Naive thymus-derived CD4-positive, alpha-beta T cell (primary cell): ENCODE measurements at regions of chr9 and their contacts with region 1.

Region 1: GRCh38 chr9:112793213-112793810 is 42.8 kb downstream of the SNX30 start:
- DNase-seq: peak; percentile 59 to 76 (median 72)
- ATAC-seq: peak; percentile 98
- H3K4me3 ChIP-seq: no peak overlapping the region
- H3K4me3 Mint-ChIP-seq: no peak overlapping the region
- H3K27ac ChIP-seq: no peak overlapping the region
- H3K27ac Mint-ChIP-seq: no peak overlapping the region
- H3K4me1 ChIP-seq: no peaks in the 10 kb centered on the region
- H3K4me1 Mint-ChIP-seq: peaks cover 0 to 19% (median 12%) of the 10 kb centered on the region in 7 donors
- H3K27me3 ChIP-seq: no peaks in the 10 kb centered on the region
- H3K27me3 Mint-ChIP-seq: no peaks in the 10 kb centered on the region

Region 2: DNA sequence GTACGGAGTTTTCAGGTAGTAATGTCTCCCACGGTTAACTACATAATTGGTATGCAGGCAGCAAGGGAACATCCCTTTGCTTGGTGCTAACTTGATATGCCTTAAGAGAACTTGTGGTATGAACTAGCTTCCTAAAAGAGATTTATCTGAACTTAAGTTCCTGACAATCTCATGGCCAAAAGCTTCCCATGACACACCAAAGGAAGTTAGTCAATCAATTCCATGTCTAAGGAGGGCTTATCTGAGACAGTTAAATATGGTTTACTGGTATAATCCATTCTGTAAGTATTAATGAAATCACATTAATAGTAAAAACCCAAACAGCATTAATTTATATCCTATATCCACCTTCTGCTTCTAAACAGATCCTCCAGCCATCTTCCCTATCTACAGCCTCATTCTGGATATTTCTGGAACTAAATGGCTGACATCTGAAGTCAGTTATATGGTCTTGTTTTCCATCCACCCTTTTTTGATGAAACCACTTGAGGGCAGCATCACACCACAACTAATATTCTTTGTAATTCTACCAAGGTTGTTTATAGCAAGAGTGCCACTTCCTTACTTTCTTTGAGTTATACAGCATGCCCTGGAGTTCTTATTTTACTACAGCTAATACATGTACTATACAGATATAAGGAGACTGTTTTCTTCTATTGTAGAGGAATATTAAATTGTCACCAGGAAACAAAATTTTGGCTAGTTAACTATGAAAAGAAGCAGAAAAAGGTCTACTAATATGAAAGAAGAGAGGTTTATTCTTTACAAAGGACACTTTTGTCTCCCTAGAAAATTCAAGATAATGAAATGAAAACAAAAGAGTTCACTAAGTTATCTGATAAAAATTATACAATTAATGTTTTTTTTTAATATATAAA is 1033.3 kb before region 1 on chr9:
- CTCF ChIA-PET with region 1: no interaction called
- POLR2A ChIA-PET with region 1: no interaction called
- intact Hi-C with region 1: loop called in 1 of 2 experiments (anchors 1 kb)
- DNase-seq: peak in 8 of 9 donors; percentile 25 to 77 (median 68)
- ATAC-seq: peak; percentile 82
- H3K4me3 ChIP-seq: no peak overlapping the region
- H3K4me3 Mint-ChIP-seq: no peak overlapping the region
- H3K27ac ChIP-seq: no peak overlapping the region
- H3K27ac Mint-ChIP-seq: no peak overlapping the region
- H3K4me1 ChIP-seq: no peaks in the 10 kb centered on the region
- H3K4me1 Mint-ChIP-seq: peaks cover 3 to 8% (median 5%) of the 10 kb centered on the region in 7 donors
- H3K27me3 ChIP-seq: no peaks in the 10 kb centered on the region
- H3K27me3 Mint-ChIP-seq: no peaks in the 10 kb centered on the region

Region 3: GRCh38 chr9:112097712-112098688 is 695.3 kb before region 1 on chr9:
- CTCF ChIA-PET with region 1: no interaction called
- POLR2A ChIA-PET with region 1: no interaction called
- intact Hi-C with region 1: loop called in 1 of 2 experiments (anchors 5 kb)
- DNase-seq: peak; percentile 41 to 85 (median 68)
- ATAC-seq: peak; percentile 93
- H3K4me3 ChIP-seq: no peak overlapping the region
- H3K4me3 Mint-ChIP-seq: no peak overlapping the region
- H3K27ac ChIP-seq: no peak overlapping the region
- H3K27ac Mint-ChIP-seq: peak overlapping the region in 1 of 9 donors; percentile 15
- H3K4me1 ChIP-seq: peaks cover 0 to 4% of the 10 kb centered on the region in 2 donors
- H3K4me1 Mint-ChIP-seq: peaks cover 2 to 32% (median 12%) of the 10 kb centered on the region in 7 donors
- H3K27me3 ChIP-seq: no peaks in the 10 kb centered on the region
- H3K27me3 Mint-ChIP-seq: peaks cover 0 to 3% (median 0%) of the 10 kb centered on the region in 5 donors

Region 4: GRCh38 chr9:112140936-112141335 is 652.4 kb before region 1 on chr9:
- CTCF ChIA-PET with region 1: no interaction called
- POLR2A ChIA-PET with region 1: no interaction called
- intact Hi-C with region 1: no loop called
- DNase-seq: no peak
- ATAC-seq: no peak
- H3K4me3 ChIP-seq: no peak overlapping the region
- H3K4me3 Mint-ChIP-seq: no peak overlapping the region
- H3K27ac ChIP-seq: no peak overlapping the region
- H3K27ac Mint-ChIP-seq: no peak overlapping the region
- H3K4me1 ChIP-seq: no peaks in the 10 kb centered on the region
- H3K4me1 Mint-ChIP-seq: peaks cover 0 to 4% (median 0%) of the 10 kb centered on the region in 7 donors
- H3K27me3 ChIP-seq: no peaks in the 10 kb centered on the region
- H3K27me3 Mint-ChIP-seq: no peaks in the 10 kb centered on the region

Region 5: DNA sequence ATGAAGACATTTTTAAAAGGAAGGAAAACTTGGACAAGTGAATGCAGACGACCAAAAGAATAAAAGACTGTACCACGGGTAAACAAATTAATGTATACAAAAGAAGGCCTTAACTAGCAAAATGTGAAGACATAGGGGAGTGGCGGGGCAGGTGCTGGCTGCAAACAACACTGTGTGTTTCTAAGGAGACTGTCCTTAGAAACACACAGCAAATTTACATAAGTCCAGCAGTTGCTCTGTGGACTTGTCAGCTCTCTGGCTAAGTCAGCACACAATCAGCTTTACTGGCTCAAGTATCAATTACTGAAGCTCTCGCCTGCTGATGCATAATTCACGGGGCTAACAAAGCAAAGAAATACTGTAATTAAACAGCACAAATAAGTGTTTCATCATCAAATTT is 484.7 kb before region 1 on chr9:
- CTCF ChIA-PET with region 1: no interaction called
- POLR2A ChIA-PET with region 1: no interaction called
- intact Hi-C with region 1: no loop called
- DNase-seq: no peak
- ATAC-seq: no peak
- H3K4me3 ChIP-seq: no peak overlapping the region
- H3K4me3 Mint-ChIP-seq: peak overlapping the region in 1 of 10 donors; percentile 25
- H3K27ac ChIP-seq: no peak overlapping the region
- H3K27ac Mint-ChIP-seq: no peak overlapping the region
- H3K4me1 ChIP-seq: peaks cover 10 to 12% of the 10 kb centered on the region in 2 donors
- H3K4me1 Mint-ChIP-seq: peaks cover 23 to 78% (median 55%) of the 10 kb centered on the region in 7 donors
- H3K27me3 ChIP-seq: no peaks in the 10 kb centered on the region
- H3K27me3 Mint-ChIP-seq: no peaks in the 10 kb centered on the region

Region 6: GRCh38 chr9:112443200-112443599 is 350.1 kb before region 1 on chr9:
- CTCF ChIA-PET with region 1: interaction called, 6 read pairs
- POLR2A ChIA-PET with region 1: no interaction called
- intact Hi-C with region 1: loop called in 1 of 2 experiments (anchors 1 kb)
- DNase-seq: peak in 6 of 9 donors; percentile 16 to 37 (median 28)
- ATAC-seq: no peak
- H3K4me3 ChIP-seq: no peak overlapping the region
- H3K4me3 Mint-ChIP-seq: no peak overlapping the region
- H3K27ac ChIP-seq: no peak overlapping the region
- H3K27ac Mint-ChIP-seq: peak overlapping the region in 1 of 9 donors; percentile 10
- H3K4me1 ChIP-seq: no peaks in the 10 kb centered on the region
- H3K4me1 Mint-ChIP-seq: peaks cover 0 to 10% (median 0%) of the 10 kb centered on the region in 7 donors
- H3K27me3 ChIP-seq: no peaks in the 10 kb centered on the region
- H3K27me3 Mint-ChIP-seq: no peaks in the 10 kb centered on the region

Region 7: DNA sequence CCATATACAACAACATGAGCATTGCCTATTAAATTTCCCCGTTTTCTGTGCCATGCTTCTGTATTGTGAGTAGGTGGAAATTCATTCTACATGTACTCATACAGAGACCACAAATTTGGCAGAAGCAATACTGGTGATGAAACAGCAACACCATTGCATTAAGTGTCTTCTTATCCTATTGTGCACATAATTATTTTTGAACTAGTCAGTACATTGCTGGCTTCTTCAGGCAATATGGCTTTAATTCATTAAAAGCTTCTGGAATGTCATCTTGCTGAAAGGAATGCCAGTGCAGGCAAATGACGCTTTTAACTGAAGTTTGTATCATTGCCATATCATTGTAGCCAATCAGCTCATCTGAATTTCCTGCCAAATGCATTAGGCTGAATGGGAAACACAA is 224.1 kb before region 1 on chr9:
- CTCF ChIA-PET with region 1: no interaction called
- POLR2A ChIA-PET with region 1: no interaction called
- intact Hi-C with region 1: loop called in 1 of 2 experiments (anchors 10 kb)
- DNase-seq: no peak
- ATAC-seq: no peak
- H3K4me3 ChIP-seq: no peak overlapping the region
- H3K4me3 Mint-ChIP-seq: no peak overlapping the region
- H3K27ac ChIP-seq: no peak overlapping the region
- H3K27ac Mint-ChIP-seq: no peak overlapping the region
- H3K4me1 ChIP-seq: no peaks in the 10 kb centered on the region
- H3K4me1 Mint-ChIP-seq: peaks cover 0 to 5% (median 0%) of the 10 kb centered on the region in 7 donors
- H3K27me3 ChIP-seq: no peaks in the 10 kb centered on the region
- H3K27me3 Mint-ChIP-seq: no peaks in the 10 kb centered on the region